ENCODE measurements at regions of chr2 and their contacts with region 1.

Region 1: GRCh38 chr2:178280244-178280852 is 86.0 kb downstream of the OSBPL6 start:
- DNase-seq: no peak
- ATAC-seq: peak; percentile 58 to 60
- H3K4me3 ChIP-seq: no peak overlapping the region
- H3K27ac ChIP-seq: no peak overlapping the region
- H3K4me1 ChIP-seq: no peaks in the 10 kb centered on the region
- H3K27me3 ChIP-seq: no peaks in the 10 kb centered on the region

Region 2: DNA sequence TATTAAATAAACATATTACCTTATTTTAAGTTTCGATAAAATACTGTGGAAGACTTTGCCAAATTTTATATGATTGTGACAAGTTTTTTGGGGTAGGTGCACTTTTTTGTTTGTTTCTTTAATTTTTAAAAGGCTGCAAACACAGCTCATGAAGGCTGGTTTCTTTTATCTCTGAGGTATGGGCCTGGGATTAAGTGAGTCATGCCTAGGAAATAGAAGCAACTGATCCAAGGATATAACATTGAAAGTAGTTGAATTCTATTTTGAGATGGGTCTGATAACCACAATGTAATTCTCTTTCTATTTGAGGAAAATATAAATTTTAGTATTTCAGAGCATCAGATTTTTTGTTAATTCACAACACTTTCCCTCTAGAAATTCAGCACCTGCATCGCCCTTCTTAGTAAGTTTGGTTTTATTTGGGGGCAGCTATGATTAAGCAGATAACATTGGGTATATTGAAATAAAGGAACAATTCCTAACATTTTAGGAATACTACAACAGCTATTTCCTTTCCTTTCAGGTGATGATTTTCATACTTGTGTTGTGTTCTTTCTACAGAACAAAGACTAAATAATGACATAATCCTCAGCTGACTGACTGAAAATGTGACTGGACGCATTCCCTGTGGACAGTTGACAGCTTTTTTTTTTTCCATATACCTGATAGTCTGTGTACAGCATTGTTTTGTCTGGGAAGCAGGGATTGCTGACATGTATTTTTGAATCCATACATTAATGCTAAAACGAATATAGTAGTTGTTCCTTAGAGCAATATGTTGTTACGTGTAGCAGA is 151.3 kb before region 1 on chr2:
- intact Hi-C with region 1: loop called in 3 of 4 experiments (anchors 5 to 10 kb)
- DNase-seq: no peak
- ATAC-seq: no peak
- H3K4me3 ChIP-seq: no peak overlapping the region
- H3K27ac ChIP-seq: no peak overlapping the region
- H3K4me1 ChIP-seq: peaks cover 1% of the 10 kb centered on the region
- H3K27me3 ChIP-seq: no peaks in the 10 kb centered on the region

Region 3: GRCh38 chr2:178136321-178137025 is 143.9 kb before region 1 on chr2:
- intact Hi-C with region 1: loop called in 3 of 4 experiments (anchors 5 to 10 kb)
- DNase-seq: peak in 1 of 3 donors; percentile 19
- ATAC-seq: no peak
- H3K4me3 ChIP-seq: no peak overlapping the region
- H3K27ac ChIP-seq: no peak overlapping the region
- H3K4me1 ChIP-seq: no peaks in the 10 kb centered on the region
- H3K27me3 ChIP-seq: no peaks in the 10 kb centered on the region

Region 4: GRCh38 chr2:178193823-178194599 is 86.3 kb before region 1 on chr2 and contains the start of gene OSBPL6:
- intact Hi-C with region 1: loop called in 2 of 4 experiments (anchors 10 kb)
- DNase-seq: peak; percentile 84 to 94 (median 92)
- ATAC-seq: peak; percentile 98 to 99
- H3K4me3 ChIP-seq: peak within 1 kb of the TSS; percentile 80
- H3K27ac ChIP-seq: peak within 1 kb of the TSS; percentile 69
- H3K4me1 ChIP-seq: no peaks in the 10 kb centered on the region
- H3K27me3 ChIP-seq: no peaks in the 10 kb centered on the region
- total RNA-seq, gene OSBPL6: 6.4 to 8.2 (median 7.4) TPM

Measured in right cardiac atrium (tissue), 5 donors.